ENCODE measurements at regions of chr17 and their contacts with region 1.

Region 1: DNA sequence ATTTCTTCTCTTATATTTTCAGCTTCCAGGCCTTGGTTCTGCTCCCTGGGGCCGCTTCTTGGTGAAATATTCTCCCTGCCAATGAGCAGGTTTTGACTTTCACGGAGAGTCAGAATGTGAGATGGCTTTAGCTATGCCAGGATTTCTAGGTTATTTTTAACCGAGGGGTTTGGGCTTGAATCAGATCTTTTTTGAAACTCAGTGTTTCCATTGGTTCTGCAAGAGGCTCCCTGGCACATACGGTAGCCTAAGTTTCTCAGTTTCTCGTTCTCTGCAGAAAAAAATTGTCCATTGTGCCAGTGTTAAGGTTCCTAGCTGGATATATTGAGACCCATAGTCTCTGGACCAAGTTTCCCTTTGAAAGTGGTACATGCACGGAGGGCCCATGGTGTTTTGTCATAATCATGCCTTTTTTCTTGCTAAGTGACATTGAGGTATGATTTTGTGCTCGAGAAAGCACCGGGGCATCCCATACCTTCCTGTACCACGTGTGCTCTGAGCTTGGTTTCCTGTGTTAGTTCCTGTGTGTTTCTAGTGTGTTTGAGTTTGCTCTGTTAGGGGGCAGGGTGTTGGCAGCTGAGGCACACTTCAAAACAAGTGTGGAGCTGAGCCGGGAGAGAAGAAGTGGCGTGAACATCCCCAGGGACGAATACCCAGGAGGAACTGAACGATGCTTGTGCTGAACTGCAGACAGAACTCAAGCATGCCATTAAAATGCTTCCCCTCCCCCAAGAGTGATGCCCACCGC is 127.2 kb downstream of the HS3ST3B1 start:
- DNase-seq: peak; percentile 51
- ATAC-seq: peak; percentile 99
- H3K4me3 Mint-ChIP-seq: peak overlapping the region; percentile 76
- H3K27ac Mint-ChIP-seq: peak overlapping the region; percentile 86
- H3K4me1 Mint-ChIP-seq: peaks cover 30% of the 10 kb centered on the region
- H3K27me3 Mint-ChIP-seq: no peaks in the 10 kb centered on the region

Region 2: DNA sequence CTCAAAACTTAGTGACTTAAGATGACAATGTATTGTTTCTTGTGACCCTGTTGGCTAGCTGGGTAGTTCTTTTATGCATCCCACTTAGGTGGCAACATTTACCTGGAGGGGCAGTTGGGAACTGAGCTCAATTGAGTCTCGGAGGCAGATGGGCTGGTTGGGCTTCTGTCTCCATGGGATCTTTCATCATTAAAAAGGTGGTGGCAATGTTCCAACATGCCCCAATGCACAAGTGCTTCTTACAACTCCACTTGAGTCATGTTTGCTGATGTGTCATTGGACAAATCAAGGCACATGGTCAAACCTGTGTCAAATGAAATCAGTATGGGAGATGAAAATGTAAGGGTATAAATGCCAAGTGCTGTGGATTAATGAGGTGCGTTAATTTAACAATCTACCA is 138.9 kb before region 1 on chr17:
- POLR2A ChIA-PET with region 1: no interaction called
- DNase-seq: no peak
- ATAC-seq: no peak
- H3K4me3 Mint-ChIP-seq: no peak overlapping the region
- H3K27ac Mint-ChIP-seq: no peak overlapping the region
- H3K4me1 Mint-ChIP-seq: no peaks in the 10 kb centered on the region
- H3K27me3 Mint-ChIP-seq: peaks cover 40% of the 10 kb centered on the region

Region 3: GRCh38 chr17:14334919-14335318 is 93.2 kb before region 1 on chr17:
- POLR2A ChIA-PET with region 1: no interaction called
- DNase-seq: no peak
- ATAC-seq: no peak
- H3K4me3 Mint-ChIP-seq: peak overlapping the region; percentile 18
- H3K27ac Mint-ChIP-seq: no peak overlapping the region
- H3K4me1 Mint-ChIP-seq: peaks cover 38% of the 10 kb centered on the region
- H3K27me3 Mint-ChIP-seq: no peaks in the 10 kb centered on the region

Region 4: GRCh38 chr17:14405189-14405588 is 22.9 kb before region 1 on chr17:
- POLR2A ChIA-PET with region 1: interaction called, 15 read pairs
- DNase-seq: no peak
- ATAC-seq: no peak
- H3K4me3 Mint-ChIP-seq: no peak overlapping the region
- H3K27ac Mint-ChIP-seq: no peak overlapping the region
- H3K4me1 Mint-ChIP-seq: peaks cover 21% of the 10 kb centered on the region
- H3K27me3 Mint-ChIP-seq: no peaks in the 10 kb centered on the region

Measured in activated naive CD8-positive, alpha-beta T cell treated with anti-CD3 and anti-CD28 coated beads, Interleukin-2, amount 10 ng/mL, durations not matched to agents 7 days and 5 days (primary cell).